ENCODE measurements at regions of chr11 and their contacts with region 1.

Region 1: GRCh38 chr11:134062265-134063123 is 6.4 kb upstream of the JAM3 start:
- DNase-seq: no peak
- ATAC-seq: no peak
- H3K4me3 Mint-ChIP-seq: no peak overlapping the region
- H3K27ac Mint-ChIP-seq: no peak overlapping the region
- H3K4me1 Mint-ChIP-seq: peaks cover 26% of the 10 kb centered on the region
- H3K27me3 Mint-ChIP-seq: peaks cover 32% of the 10 kb centered on the region
- CTCF ChIP-seq: no peak

Region 2: GRCh38 chr11:134139873-134140331 is 77.4 kb after region 1 on chr11:
- CTCF ChIA-PET with region 1: interaction called, 14 read pairs
- POLR2A ChIA-PET with region 1: interaction called, 3 read pairs
- intact Hi-C with region 1: no loop called
- DNase-seq: peak; percentile 73
- ATAC-seq: peak; percentile 93
- H3K4me3 Mint-ChIP-seq: no peak overlapping the region
- H3K27ac Mint-ChIP-seq: no peak overlapping the region
- H3K4me1 Mint-ChIP-seq: peaks cover 18% of the 10 kb centered on the region
- H3K27me3 Mint-ChIP-seq: no peaks in the 10 kb centered on the region
- CTCF ChIP-seq: peak; percentile 80

Measured in activated CD8-positive, alpha-beta T cell treated with anti-CD3 and anti-CD28 coated beads for 36 hours (primary cell).